ENCODE measurements at regions of chrX and their contacts with region 1.

Region 1: GRCh38 chrX:56729152-56729850 is at the start of gene NBDY:
- DNase-seq: peak; percentile 41
- H3K4me3 Mint-ChIP-seq: peak within 1 kb of the TSS; percentile 89
- H3K27ac Mint-ChIP-seq: peak within 1 kb of the TSS; percentile 94
- H3K4me1 Mint-ChIP-seq: peaks cover 22% of the 10 kb centered on the region
- H3K27me3 Mint-ChIP-seq: no peaks in the 10 kb centered on the region
- total RNA-seq, gene NBDY: 45.8 to 46.3 TPM

Region 2: DNA sequence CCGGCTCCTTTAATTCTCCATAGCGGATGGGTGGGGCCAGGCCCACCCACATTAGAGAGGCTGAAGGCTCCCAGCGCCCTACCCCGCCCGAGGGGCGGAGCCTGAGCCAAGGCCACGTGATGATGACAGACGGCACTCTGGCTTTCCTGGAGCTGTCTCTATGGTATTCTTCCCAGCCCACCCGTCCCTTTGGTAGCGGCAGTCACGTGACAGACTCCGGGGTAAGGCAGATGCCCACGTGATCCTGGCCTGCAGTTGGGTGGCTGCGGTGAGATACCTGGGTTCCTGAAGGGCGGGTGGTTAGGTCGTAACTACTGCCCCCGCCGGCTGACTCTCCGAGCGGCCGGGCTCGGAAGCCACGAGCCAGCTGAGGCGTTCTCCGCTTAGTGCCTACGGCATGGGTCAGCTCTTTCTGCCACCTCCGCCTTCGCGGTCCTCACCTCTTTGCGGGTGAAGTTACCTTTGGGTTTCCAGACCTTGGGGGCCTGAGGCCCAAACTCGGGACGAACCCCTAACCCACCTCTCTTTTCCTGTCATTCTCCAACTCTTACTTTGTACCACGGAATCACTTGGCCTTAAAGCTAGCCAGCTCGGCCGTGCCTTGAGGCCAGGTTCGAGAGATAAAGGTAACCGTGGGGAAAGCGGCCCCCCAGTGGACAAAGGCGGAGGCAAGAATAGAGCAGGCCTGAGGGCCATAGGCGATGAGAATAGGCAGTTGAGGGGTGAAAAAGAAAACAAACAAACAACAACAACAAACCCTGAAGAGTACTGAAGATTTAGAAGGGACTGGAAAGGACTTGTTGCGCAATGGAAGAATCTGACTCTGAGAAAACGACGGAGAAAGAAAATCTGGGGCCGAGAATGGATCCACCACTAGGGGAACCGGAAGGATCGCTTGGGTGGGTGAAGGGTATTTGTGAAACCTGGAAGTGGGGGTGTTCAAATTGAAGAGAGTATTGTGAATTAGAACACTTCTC is 1011.5 kb before region 1 on chrX and contains the start of gene RRAGB:
- CTCF ChIA-PET with region 1: interaction called, 3 read pairs
- intact Hi-C with region 1: loop called (anchors 5 kb)
- DNase-seq: peak; percentile 91
- H3K4me3 Mint-ChIP-seq: peak within 1 kb of the TSS; percentile 80
- H3K27ac Mint-ChIP-seq: peak within 1 kb of the TSS; percentile 91
- H3K4me1 Mint-ChIP-seq: peaks cover 32% of the 10 kb centered on the region
- H3K27me3 Mint-ChIP-seq: no peaks in the 10 kb centered on the region
- total RNA-seq, gene RRAGB: 3.4 to 4.0 TPM

Region 3: DNA sequence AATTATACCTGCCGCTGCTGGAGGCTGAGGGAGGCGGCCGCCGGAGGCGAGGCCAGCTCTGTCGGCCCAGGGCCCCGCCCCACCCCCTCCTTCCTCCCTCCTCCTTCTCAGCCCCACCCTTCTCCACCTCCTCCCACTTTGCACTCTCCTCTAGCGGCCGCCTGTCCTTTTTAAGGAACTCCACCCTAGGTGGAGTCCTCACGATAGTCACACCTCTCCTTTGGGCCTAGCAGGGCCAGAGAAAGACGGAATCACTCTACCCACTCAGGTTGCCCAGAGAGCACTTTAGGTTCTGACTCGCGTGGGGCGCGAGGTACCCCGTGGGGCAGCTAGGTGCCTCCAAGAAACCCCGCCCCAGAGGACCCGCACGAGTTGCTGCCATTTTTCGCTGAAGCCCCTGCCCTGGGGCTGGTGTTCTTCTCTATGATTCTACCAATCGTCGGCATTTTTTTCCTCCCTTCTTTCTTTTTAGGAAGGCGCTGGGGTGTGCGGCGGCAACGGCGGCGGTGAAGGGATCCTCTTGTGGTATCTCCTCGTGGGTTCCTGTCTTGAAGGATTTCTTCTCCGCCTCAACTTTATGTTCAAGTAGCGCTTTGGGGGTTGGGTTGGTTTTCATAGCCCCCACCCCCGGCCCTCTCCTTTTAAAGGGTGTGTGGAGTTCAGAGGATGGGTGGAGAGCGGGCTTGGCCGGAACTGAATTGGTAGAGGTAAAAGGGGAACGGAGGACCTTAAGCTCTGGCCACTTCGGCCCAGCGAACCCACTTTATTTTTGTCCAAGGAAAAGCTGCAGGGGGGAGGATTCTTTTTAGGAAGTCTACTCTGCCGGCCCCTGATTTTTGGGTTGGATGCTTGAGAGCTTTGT is 496.8 kb before region 1 on chrX and contains the start of gene KLF8:
- CTCF ChIA-PET with region 1: interaction called, 3 read pairs
- intact Hi-C with region 1: loop called (anchors 5 kb)
- DNase-seq: peak; percentile 56
- H3K4me3 Mint-ChIP-seq: peak within 1 kb of the TSS; percentile 74
- H3K27ac Mint-ChIP-seq: no peak within 1 kb of the TSS
- H3K4me1 Mint-ChIP-seq: no peaks in the 10 kb centered on the region
- H3K27me3 Mint-ChIP-seq: no peaks in the 10 kb centered on the region
- total RNA-seq, gene KLF8: 1.0 to 1.3 TPM

Region 4: GRCh38 chrX:56382278-56382677 is 347.0 kb before region 1 on chrX:
- CTCF ChIA-PET with region 1: interaction called, 3 read pairs
- intact Hi-C with region 1: loop called (anchors 2 kb)
- DNase-seq: peak; percentile 41
- H3K4me3 Mint-ChIP-seq: no peak overlapping the region
- H3K27ac Mint-ChIP-seq: peak overlapping the region; percentile 82
- H3K4me1 Mint-ChIP-seq: peaks cover 44% of the 10 kb centered on the region
- H3K27me3 Mint-ChIP-seq: no peaks in the 10 kb centered on the region

Region 5: GRCh38 chrX:56462389-56462788 is 266.9 kb before region 1 on chrX:
- CTCF ChIA-PET with region 1: no interaction called
- intact Hi-C with region 1: loop called (anchors 2 kb)
- DNase-seq: no peak
- H3K4me3 Mint-ChIP-seq: no peak overlapping the region
- H3K27ac Mint-ChIP-seq: no peak overlapping the region
- H3K4me1 Mint-ChIP-seq: peaks cover 24% of the 10 kb centered on the region
- H3K27me3 Mint-ChIP-seq: no peaks in the 10 kb centered on the region

Region 6: GRCh38 chrX:56615282-56615681 is 114.0 kb before region 1 on chrX:
- CTCF ChIA-PET with region 1: no interaction called
- intact Hi-C with region 1: no loop called
- DNase-seq: no peak
- H3K4me3 Mint-ChIP-seq: no peak overlapping the region
- H3K27ac Mint-ChIP-seq: no peak overlapping the region
- H3K4me1 Mint-ChIP-seq: no peaks in the 10 kb centered on the region
- H3K27me3 Mint-ChIP-seq: no peaks in the 10 kb centered on the region

Region 7: DNA sequence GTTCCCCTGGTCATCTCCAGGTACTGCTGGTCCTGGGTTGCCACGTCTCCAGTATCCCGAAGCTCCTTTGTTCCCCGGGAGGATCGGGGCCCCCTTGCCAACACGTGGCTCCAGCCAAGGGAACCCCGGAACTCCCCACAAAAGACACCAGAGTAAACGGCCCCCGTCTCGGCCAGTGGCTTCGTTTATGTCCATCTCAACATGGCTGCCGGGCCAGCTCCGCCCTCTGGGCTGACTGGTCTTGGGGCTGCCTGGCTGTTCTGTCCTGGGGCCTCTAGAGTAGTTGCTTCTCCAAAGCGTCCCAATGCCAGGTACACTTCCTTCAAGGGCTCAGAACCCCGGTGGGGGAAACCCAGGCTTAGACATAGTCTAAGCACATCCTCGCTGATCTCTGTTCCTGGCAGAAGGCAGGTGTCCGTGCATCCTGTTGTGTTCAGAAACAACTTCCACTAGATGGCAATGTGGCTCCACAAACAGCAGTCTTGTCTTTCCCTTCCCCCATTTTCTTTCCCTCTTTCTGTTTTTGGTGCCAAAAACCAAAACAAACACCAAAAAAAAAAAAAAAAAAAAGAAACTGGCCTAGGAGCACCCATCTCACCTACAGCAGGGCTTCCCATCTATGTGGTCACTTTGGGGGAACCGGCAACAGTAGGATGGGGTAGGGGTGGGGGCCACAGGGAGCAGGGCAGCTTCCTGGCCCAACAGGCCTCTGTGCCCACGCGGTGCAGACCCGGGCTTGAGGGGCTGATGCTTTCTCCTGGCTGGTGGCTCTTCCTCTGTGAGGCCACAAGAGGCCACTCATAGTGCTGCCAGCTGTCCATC is 35.1 kb after region 1 on chrX:
- CTCF ChIA-PET with region 1: no interaction called
- intact Hi-C with region 1: loop called (anchors 1 kb)
- DNase-seq: peak; percentile 84
- H3K4me3 Mint-ChIP-seq: peak overlapping the region; percentile 66
- H3K27ac Mint-ChIP-seq: peak overlapping the region; percentile 96
- H3K4me1 Mint-ChIP-seq: peaks cover 54% of the 10 kb centered on the region
- H3K27me3 Mint-ChIP-seq: no peaks in the 10 kb centered on the region

Region 8: GRCh38 chrX:56978172-56978571 is 248.9 kb after region 1 on chrX:
- CTCF ChIA-PET with region 1: no interaction called
- intact Hi-C with region 1: loop called (anchors 2 kb)
- DNase-seq: peak; percentile 55
- H3K4me3 Mint-ChIP-seq: no peak overlapping the region
- H3K27ac Mint-ChIP-seq: no peak overlapping the region
- H3K4me1 Mint-ChIP-seq: peaks cover 3% of the 10 kb centered on the region
- H3K27me3 Mint-ChIP-seq: no peaks in the 10 kb centered on the region

Measured in activated naive CD4-positive, alpha-beta T cell treated with anti-CD3 and anti-CD28 coated beads for 36 hours (primary cell).